ENCODE measurements at regions of chr18 and their contacts with region 1.

Region 1: DNA sequence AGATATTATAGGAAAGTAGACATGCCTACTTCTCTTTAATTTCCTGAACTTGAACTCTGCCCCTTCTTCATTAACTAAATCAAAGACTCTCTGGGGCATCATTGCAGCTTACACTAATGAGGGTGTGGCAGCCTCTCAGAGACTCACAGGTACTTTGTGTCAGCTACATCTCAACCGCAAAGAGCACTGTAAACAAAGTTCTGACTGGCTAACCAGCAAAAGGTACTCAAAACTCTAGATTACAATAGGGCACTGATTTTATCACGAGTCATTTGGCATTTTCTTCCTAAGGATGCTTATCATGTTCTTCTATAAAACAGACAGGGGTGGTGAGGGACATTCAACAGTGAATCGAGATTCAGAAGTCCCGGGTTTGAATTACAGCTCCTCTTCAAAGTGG is 2.3 kb downstream of the DSG4 start:
- DNase-seq: no peak
- ATAC-seq: no peak
- H3K4me3 ChIP-seq: no peak overlapping the region
- H3K4me3 Mint-ChIP-seq: no peak overlapping the region
- H3K27ac ChIP-seq: no peak overlapping the region
- H3K27ac Mint-ChIP-seq: no peak overlapping the region
- H3K4me1 ChIP-seq: no peaks in the 10 kb centered on the region
- H3K4me1 Mint-ChIP-seq: no peaks in the 10 kb centered on the region
- H3K27me3 ChIP-seq: no peaks in the 10 kb centered on the region
- H3K27me3 Mint-ChIP-seq: no peaks in the 10 kb centered on the region

Region 2: DNA sequence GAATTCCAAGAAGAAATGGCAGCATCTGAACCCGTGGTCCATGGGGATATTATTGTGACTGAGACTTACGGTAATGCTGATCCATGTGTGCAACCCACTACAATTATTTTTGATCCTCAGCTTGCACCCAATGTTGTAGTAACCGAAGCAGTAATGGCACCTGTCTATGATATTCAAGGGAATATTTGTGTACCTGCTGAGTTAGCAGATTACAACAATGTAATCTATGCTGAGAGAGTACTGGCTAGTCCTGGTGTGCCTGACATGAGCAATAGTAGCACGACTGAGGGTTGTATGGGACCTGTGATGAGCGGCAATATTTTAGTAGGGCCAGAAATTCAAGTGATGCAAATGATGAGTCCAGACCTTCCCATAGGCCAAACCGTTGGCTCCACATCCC is 34.3 kb after region 1 on chr18:
- CTCF ChIA-PET with region 1: no interaction called
- POLR2A ChIA-PET with region 1: no interaction called
- intact Hi-C with region 1: loop called in 1 of 2 experiments (anchors 2 kb)
- DNase-seq: no peak
- ATAC-seq: no peak
- H3K4me3 ChIP-seq: no peak overlapping the region
- H3K4me3 Mint-ChIP-seq: peak overlapping the region in 1 of 10 donors; percentile 38
- H3K27ac ChIP-seq: no peak overlapping the region
- H3K27ac Mint-ChIP-seq: no peak overlapping the region
- H3K4me1 ChIP-seq: no peaks in the 10 kb centered on the region
- H3K4me1 Mint-ChIP-seq: no peaks in the 10 kb centered on the region
- H3K27me3 ChIP-seq: no peaks in the 10 kb centered on the region
- H3K27me3 Mint-ChIP-seq: no peaks in the 10 kb centered on the region